Activated naive CD4-positive, alpha-beta T cell treated with anti-CD3 and anti-CD28 coated beads for 36 hours (primary cell): ENCODE measurements at regions of chr5 and their contacts with region 1.

Region 1: DNA sequence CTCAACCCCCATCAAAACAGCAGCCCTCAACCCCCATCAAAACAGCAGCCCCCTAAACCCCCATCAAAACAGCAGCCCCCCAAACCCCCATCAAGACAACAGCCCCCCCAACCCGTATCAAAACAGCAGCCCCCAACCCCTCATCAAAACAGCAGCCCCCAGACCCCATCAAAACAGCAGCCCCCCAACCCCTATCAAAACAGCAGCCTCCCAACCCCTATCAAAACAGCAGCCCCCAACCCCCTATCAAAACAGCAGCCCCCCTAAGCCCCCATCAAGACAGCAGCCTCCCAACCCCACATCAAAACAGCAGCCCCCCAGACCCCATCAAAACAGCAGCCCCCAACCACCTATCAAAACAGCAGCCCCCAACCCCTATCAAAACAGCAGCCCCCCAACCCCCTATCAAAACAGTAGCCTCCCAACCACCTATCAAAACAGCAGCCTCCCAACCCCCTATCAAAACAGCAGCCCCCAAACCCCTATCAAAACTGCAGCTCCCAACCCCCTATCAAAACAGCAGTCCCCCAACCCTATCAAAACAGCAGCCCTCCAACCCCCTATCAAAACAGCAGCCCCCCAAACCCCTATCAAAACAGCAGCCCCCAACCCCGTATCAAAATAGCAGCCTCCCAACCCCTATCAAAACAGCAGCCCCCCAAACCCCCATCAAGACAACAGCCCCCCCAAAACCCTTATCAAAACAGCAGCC is 1.2 kb downstream of the TPPP start:
- DNase-seq: no peak
- H3K4me3 Mint-ChIP-seq: no peak overlapping the region
- H3K27ac Mint-ChIP-seq: no peak overlapping the region
- H3K4me1 Mint-ChIP-seq: no peaks in the 10 kb centered on the region
- H3K27me3 Mint-ChIP-seq: no peaks in the 10 kb centered on the region

Region 2: GRCh38 chr5:586751-587285 is 105.2 kb before region 1 on chr5:
- CTCF ChIA-PET with region 1: no interaction called
- intact Hi-C with region 1: no loop called
- DNase-seq: no peak
- H3K4me3 Mint-ChIP-seq: no peak overlapping the region
- H3K27ac Mint-ChIP-seq: no peak overlapping the region
- H3K4me1 Mint-ChIP-seq: no peaks in the 10 kb centered on the region
- H3K27me3 Mint-ChIP-seq: peaks cover 23% of the 10 kb centered on the region

Region 3: DNA sequence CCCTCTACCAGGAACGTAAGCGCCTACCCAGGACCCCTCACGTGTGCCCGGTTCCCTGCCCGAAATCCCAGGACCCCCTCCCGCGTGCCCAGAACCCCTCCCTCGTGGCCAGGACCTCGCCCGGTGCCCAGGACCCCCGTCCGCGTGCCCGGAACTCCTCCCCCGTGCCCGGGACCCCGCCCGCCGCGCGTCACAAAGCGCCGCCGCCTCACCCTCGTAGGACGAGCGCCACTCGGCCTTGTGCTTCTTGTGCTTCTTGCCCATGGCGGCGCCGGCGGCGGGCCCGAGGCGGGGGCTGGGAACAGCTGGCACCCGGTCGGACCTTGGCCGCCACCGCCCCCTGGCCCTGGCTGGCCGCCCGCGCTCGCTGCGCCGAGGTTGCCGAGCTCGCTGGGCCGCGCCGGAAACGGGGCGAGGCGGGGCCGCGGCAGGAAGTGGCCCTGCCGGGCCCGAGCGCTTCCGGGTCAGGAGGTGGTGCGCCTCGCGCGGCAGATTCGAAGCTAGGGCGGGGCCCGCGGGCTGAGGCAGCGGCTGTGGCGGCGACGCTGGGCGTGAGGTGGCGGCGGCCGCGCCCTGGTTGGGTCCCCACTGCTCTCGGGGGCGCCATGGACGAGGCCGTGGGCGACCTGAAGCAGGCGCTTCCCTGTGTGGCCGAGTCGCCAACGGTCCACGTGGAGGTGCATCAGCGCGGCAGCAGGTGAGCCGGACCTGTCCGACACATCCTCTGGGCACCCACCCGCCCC is 200.6 kb after region 1 on chr5 and contains the starts of genes BRD9 and TRIP13:
- CTCF ChIA-PET with region 1: no interaction called
- intact Hi-C with region 1: loop called (anchors 2 kb)
- DNase-seq: peak; percentile 86
- H3K4me3 Mint-ChIP-seq: peak within 1 kb of the TSS; percentile 87
- H3K27ac Mint-ChIP-seq: peak within 1 kb of the TSS; percentile 77
- H3K4me1 Mint-ChIP-seq: peaks cover 34% of the 10 kb centered on the region
- H3K27me3 Mint-ChIP-seq: no peaks in the 10 kb centered on the region
- total RNA-seq, gene BRD9: 42.4 to 45.4 TPM
- total RNA-seq, gene TRIP13: 24.0 to 29.9 TPM